Posterior vena cava (tissue), 2 donors: ENCODE measurements at regions of chr2 and their contacts with region 1.

Region 1: DNA sequence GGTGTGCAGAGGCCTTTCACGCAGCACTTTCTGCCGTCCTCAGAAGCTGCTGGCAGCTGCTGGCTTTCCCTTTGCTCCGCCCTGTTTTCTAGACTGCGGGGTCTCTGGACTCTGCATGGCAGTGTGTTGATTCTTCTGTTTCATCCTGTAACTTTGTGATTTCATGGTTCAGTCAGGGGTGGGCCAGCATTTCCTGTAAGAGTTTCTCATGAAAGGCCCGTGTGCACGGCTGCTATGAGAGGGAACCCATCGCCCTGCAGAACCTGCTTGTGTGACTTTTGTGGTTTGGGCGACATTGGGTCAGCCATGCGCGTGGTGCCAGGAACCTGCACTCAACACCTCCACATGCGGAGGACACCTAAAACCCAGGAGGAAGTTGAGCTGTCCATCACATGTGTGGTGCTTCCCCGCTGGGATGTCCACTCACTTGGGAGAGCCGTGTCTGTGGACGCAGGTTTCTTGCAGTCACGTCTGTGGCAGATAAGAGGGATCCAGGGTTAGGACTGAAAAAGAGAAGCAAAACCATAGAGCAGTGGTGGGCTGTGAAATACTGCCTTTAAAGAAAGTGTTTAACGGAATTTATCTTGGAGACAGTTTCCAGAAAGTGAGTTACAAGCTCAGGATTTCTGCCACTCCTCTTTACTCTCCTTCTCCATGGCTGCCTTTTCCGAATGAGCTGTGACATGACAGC is 167.3 kb upstream of the ALKAL2 start:
- DNase-seq: no peak

Region 2: GRCh38 chr2:383178-383577 is 72.0 kb before region 1 on chr2:
- intact Hi-C with region 1: loop called in 1 of 2 experiments (anchors 10 kb)
- DNase-seq: no peak

Region 3: GRCh38 chr2:437762-438393 is 17.3 kb before region 1 on chr2:
- intact Hi-C with region 1: no loop called
- DNase-seq: no peak